ENCODE measurements at regions of chr5 and their contacts with region 1.

Region 1: GRCh38 chr5:41707853-41708603 is 162.2 kb downstream of the OXCT1 start:
- DNase-seq: no peak
- H3K4me3 Mint-ChIP-seq: no peak overlapping the region
- H3K27ac Mint-ChIP-seq: no peak overlapping the region
- H3K4me1 Mint-ChIP-seq: no peaks in the 10 kb centered on the region
- H3K27me3 Mint-ChIP-seq: peaks cover 15% of the 10 kb centered on the region

Region 2: DNA sequence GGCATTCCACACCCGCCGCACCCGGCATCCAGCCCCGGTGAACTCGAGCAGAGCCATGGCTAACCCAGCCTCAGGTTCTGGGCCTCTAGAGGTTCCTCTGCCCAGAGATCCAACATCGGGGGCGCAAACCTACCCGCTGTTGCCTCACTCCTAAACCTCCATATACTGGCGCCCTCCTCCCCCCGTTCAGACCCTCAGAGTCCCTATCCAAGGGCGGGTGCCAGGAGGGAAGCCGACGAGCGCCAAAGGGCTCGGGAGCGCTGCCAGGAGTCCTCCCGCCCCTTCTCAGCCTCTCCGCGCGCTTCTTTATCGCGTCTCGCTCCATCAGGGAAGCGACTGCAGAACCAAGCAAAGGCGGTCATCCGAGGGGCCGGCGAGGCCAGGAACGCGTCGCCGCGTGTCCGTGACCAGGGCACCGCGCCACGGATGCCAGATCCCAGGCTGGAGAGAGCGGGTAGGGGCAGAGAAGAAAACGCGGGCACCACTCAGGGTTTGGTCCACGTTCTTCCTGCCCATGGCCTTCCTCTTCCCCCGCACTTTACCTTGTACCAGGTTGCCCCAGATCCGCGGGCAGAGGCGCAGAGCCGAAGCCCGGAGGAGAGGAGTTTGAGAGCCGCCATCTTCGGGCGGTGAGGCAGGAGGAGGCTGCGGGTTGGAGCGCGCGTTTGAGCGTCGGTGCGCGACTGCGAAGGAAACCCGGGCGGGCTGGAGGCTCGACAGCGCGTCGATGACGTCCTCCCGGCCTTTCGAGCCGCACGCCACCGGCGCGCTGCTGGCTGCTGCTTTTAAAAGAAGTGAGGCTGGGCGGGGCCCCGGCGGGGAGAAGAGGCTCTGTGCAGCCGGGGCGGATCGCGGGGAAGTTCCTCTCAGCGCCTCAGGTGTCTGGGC is 162.0 kb after region 1 on chr5 and contains the start of gene OXCT1:
- intact Hi-C with region 1: no loop called
- DNase-seq: peak; percentile 92
- H3K4me3 Mint-ChIP-seq: peak within 1 kb of the TSS; percentile 94
- H3K27ac Mint-ChIP-seq: peak within 1 kb of the TSS; percentile 96
- H3K4me1 Mint-ChIP-seq: peaks cover 56% of the 10 kb centered on the region
- H3K27me3 Mint-ChIP-seq: no peaks in the 10 kb centered on the region
- total RNA-seq, gene OXCT1: 84.4 and 85.1 TPM in 2 replicates

Region 3: DNA sequence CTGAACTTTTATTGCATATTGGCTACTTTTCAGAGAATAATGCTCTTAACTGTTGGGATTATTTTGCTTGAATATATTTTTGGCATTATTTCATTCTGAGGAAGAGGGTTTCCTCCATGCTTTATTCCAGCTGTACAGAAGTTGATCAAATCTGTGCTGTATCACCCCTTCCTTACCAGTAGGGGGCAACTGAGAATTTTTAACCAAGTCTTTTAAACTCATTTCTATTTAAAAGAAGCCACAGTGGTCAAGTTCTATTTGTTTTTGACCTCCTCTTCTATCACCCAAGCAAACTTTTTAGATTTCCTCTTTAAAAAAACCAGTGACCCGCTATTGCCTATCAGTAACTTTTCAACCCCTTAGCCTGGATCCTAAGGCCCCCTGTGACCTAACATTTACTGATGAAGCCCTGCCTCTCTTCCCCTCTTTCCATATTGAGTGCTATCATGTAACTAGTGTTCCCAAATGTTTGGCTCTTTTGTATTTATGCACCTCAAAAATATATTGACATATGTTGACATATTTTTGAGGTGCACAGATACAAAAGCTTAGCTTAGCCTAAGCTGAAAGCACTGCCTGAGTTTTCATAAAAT is 297.6 kb after region 1 on chr5:
- intact Hi-C with region 1: loop called (anchors 5 kb)
- DNase-seq: no peak
- H3K4me3 Mint-ChIP-seq: no peak overlapping the region
- H3K27ac Mint-ChIP-seq: no peak overlapping the region
- H3K4me1 Mint-ChIP-seq: no peaks in the 10 kb centered on the region
- H3K27me3 Mint-ChIP-seq: peaks cover 4% of the 10 kb centered on the region

Measured in activated T-helper 1 cell treated with anti-CD3 and anti-CD28 coated beads, Interleukin-12 subunit alpha, Interleukin-12 subunit beta, Interleukin-2, Interleukin-4 antibody, amounts not matched to agents 30 ng/mL and 10 ng/mL and 1 ng/mL, durations not matched to agents 14 hours and 24 hours and 36 hours (primary cell).